ENCODE measurements at regions of chr5 and their contacts with region 1.

Region 1: GRCh38 chr5:58886315-58887207 is 303.7 kb downstream of the RAB3C start:
- DNase-seq: peak; percentile 58
- H3K4me3 ChIP-seq: no peak overlapping the region
- H3K27ac ChIP-seq: no peak overlapping the region
- H3K4me1 ChIP-seq: no peaks in the 10 kb centered on the region
- H3K27me3 ChIP-seq: no peaks in the 10 kb centered on the region
- CTCF ChIP-seq: peak; percentile 79 to 87 (median 83)
- POLR2A ChIP-seq: no peak

Region 2: GRCh38 chr5:59007460-59008063 is 121.0 kb after region 1 on chr5:
- intact Hi-C with region 1: loop called (anchors 10 kb)
- DNase-seq: no peak
- H3K4me3 ChIP-seq: no peak overlapping the region
- H3K27ac ChIP-seq: no peak overlapping the region
- H3K4me1 ChIP-seq: no peaks in the 10 kb centered on the region
- H3K27me3 ChIP-seq: no peaks in the 10 kb centered on the region
- CTCF ChIP-seq: peak in 3 of 4 experiments; percentile 24 to 46 (median 43)
- POLR2A ChIP-seq: no peak

Region 3: DNA sequence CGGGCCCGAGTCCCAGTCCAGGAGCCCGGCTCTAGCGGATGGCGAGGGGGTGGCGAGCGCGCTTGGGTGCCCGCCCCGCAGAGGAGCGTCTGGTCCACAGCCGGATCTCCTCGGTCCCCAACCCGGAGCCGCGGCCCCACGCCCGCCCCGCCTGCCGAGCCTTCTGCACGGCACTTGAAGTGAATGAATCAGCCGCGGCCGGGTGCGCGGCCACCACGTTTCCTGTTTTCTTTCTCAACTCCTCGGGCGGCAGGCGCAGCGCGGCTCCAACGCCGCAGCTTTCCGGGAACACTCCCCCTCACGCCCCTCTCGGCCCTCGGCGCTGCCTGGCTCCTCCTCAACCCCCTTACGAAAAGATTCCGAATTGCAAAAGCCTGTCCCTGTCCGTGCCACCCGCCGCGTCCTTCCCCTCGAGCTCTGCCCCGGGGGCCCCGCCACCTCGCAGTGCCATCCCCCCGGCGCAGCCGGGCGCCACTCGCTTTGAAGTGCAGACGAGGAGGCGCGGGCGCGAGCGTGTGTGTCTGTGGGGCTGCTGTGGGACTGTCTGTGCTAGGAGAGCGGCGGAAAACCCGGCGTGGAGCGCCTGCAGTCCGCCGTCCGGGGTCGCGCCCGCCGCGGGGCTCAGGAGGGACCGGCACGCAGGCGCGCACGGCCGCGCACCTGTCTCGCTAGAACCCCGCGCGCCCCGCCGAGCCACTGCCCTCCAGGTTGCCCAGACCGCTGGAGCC is 152.9 kb after region 1 on chr5:
- intact Hi-C with region 1: loop called (anchors 5 kb)
- DNase-seq: peak; percentile 60
- H3K4me3 ChIP-seq: peak overlapping the region; percentile 52
- H3K27ac ChIP-seq: peak overlapping the region; percentile 30 to 67
- H3K4me1 ChIP-seq: no peaks in the 10 kb centered on the region
- H3K27me3 ChIP-seq: no peaks in the 10 kb centered on the region
- CTCF ChIP-seq: no peak
- POLR2A ChIP-seq: peak; percentile 54

Region 4: GRCh38 chr5:59174248-59174844 is 287.8 kb after region 1 on chr5:
- intact Hi-C with region 1: loop called (anchors 2 kb)
- DNase-seq: peak; percentile 22
- H3K4me3 ChIP-seq: no peak overlapping the region
- H3K27ac ChIP-seq: no peak overlapping the region
- H3K4me1 ChIP-seq: no peaks in the 10 kb centered on the region
- H3K27me3 ChIP-seq: no peaks in the 10 kb centered on the region
- CTCF ChIP-seq: peak; percentile 46 to 74 (median 61)
- POLR2A ChIP-seq: no peak

Region 5: DNA sequence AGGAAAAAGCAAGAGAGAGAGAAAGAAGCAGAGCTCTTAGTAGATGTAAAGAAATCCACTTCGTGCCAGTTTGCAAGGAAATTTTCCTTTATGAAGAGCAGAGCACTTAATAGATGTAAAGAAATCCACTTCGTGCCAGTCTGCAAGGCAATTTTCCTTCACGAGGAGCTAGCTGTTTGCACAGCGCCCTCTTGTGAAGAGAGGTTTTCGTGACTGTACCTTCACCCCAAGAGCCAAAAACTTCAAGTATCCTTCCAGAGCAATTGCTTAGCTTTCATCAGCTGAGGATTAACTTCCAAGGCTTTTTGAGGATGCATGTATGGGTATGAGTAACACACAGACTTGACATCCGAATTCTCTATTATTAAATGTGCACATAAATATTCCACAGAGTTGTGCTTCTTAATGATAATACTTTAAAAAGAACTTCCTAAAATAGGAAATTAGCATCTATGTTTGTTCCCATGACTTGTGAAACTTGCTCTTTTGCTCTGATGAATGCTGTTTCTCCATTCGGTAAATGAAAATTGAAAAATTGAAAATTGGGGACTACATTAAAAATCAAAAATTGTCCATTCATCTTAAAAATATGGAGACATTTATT is 481.3 kb after region 1 on chr5:
- intact Hi-C with region 1: loop called (anchors 5 kb)
- DNase-seq: peak; percentile 63
- H3K4me3 ChIP-seq: no peak overlapping the region
- H3K27ac ChIP-seq: no peak overlapping the region
- H3K4me1 ChIP-seq: no peaks in the 10 kb centered on the region
- H3K27me3 ChIP-seq: no peaks in the 10 kb centered on the region
- CTCF ChIP-seq: peak in 3 of 4 experiments; percentile 61 to 69 (median 62)
- POLR2A ChIP-seq: no peak

Region 6: DNA sequence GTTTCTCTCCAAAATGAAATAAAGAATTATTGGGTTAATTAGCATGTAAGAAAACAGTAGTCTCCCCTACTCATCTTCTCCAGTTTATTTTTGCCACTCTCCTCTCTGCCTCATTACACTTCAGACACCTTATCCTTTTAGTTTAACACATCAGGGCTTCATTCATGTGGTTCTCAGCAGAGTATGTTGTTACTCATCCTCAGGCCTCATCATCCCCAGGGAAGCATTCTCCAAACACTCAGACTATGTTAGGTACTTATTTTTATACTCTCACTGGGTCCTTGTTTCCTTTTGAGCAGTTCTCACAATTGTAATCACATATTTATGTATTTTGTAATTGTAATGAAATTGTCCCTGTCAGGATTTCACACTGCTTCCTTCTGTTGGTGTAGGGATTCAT is 536.5 kb after region 1 on chr5:
- intact Hi-C with region 1: no loop called
- DNase-seq: no peak
- H3K4me3 ChIP-seq: no peak overlapping the region
- H3K27ac ChIP-seq: no peak overlapping the region
- H3K4me1 ChIP-seq: no peaks in the 10 kb centered on the region
- H3K27me3 ChIP-seq: no peaks in the 10 kb centered on the region
- CTCF ChIP-seq: no peak
- POLR2A ChIP-seq: no peak

Region 7: DNA sequence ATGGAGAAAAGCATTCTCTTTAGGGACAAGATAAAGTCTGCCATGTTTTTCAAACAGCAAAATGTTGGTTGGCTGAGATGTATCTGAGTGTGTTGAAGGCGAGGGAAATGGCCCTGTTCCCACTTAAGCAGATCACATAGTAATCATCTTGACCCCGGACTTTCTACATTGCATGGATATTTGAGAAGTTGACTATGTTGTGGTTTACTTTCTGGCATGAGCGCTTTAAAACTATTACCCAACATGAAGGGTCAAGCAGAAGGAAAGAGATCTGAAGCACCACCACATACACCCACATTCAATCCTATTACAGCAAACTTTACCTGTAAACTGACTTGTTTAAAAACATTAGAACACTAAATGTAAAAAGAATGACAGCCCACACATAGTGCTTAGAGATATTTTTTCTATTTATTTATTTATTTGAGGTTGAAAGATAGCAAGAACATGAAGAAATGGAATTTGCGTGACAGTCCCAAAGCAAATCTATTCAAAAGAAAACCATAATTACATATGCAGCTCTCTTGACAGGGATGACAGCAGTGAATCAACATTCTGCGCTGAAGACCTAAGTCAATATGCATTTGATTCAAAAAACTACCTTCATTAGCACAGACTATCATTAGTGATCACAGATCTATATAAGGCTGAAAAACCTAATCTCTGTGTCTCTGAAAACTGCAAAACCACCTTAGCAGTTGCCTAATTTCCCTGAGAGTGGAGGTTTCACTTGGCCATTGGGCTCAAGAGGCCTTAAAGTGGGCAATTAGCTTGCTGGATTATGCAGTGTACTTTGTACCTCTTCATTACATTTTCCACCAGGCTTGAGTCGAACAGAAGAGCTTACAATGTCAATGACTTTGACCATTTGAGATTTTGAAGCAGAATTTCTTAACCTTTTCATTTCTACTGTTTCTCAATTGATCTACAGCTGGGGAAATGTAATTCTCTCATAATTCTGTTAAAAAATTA is 811.9 kb after region 1 on chr5:
- intact Hi-C with region 1: no loop called
- DNase-seq: no peak
- H3K4me3 ChIP-seq: no peak overlapping the region
- H3K27ac ChIP-seq: no peak overlapping the region
- H3K4me1 ChIP-seq: no peaks in the 10 kb centered on the region
- H3K27me3 ChIP-seq: no peaks in the 10 kb centered on the region
- CTCF ChIP-seq: no peak
- POLR2A ChIP-seq: no peak

Region 8: GRCh38 chr5:59799668-59800346 is 913.2 kb after region 1 on chr5:
- intact Hi-C with region 1: loop called (anchors 10 kb)
- DNase-seq: peak; percentile 42
- H3K4me3 ChIP-seq: no peak overlapping the region
- H3K27ac ChIP-seq: peak overlapping the region; percentile 48 to 68
- H3K4me1 ChIP-seq: no peaks in the 10 kb centered on the region
- H3K27me3 ChIP-seq: no peaks in the 10 kb centered on the region
- CTCF ChIP-seq: peak; percentile 80 to 93 (median 90)
- POLR2A ChIP-seq: no peak